Left cardiac atrium (tissue), 4 donors: ENCODE measurements at regions of chr1 and their contacts with region 1.

Region 1: GRCh38 chr1:115807723-115808122 is 33.2 kb downstream of the NHLH2 start:
- DNase-seq: peak; percentile 23
- ATAC-seq: peak; percentile 47 to 83

Region 2: DNA sequence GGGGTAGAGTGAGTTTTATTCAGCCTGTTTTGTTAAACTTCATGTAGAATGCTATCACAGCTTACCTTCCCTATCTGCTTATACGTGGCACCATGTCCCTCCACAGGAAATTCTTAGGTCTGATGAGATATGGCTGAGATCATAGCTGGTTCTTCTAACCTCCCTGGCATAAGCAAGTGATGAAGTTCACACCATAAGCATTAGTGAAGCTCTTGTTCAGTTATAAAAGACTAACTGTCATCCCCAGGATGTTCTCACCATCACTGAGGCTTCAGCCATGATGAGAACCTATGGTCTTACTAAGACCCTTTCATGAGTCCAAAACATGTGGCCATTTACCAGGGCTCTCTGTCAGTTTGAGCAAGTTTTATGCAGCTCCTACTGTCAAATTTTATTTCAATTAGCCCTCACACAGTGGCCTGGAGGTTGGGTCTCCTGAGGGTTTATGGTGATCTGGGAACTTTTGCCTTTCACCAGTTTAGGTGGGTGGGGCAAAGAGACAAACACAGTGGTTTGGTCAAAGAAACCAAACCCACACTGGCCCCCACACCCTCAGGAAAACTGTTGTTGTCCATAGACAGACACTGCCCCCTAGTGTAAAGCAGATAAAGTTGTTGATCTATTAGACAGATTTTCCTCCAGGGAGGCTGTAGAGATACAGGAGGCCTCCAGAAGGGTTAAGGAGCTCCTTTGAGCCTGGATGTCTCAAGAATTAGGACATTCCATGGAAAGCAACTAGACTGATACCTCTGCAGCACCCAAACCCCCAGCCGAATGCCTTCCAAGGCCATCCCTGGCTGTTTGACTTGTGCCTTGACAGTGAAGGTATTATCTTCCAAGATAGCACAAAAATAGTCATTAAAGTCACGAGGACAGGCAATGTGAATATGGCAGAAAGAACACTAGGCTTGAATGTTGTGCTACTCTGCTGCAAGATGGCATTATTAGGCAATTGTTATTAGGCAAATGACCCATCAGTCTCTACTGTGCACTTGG is 173.6 kb after region 1 on chr1:
- intact Hi-C with region 1: loop called in 1 of 2 experiments (anchors 10 kb)
- DNase-seq: peak; percentile 26
- ATAC-seq: peak in 1 of 2 donors; percentile 61

Region 3: GRCh38 chr1:116020668-116021275 is 213.0 kb after region 1 on chr1:
- intact Hi-C with region 1: loop called in 1 of 2 experiments (anchors 2 kb)
- DNase-seq: peak; percentile 49
- ATAC-seq: peak; percentile 63 to 72

Region 4: DNA sequence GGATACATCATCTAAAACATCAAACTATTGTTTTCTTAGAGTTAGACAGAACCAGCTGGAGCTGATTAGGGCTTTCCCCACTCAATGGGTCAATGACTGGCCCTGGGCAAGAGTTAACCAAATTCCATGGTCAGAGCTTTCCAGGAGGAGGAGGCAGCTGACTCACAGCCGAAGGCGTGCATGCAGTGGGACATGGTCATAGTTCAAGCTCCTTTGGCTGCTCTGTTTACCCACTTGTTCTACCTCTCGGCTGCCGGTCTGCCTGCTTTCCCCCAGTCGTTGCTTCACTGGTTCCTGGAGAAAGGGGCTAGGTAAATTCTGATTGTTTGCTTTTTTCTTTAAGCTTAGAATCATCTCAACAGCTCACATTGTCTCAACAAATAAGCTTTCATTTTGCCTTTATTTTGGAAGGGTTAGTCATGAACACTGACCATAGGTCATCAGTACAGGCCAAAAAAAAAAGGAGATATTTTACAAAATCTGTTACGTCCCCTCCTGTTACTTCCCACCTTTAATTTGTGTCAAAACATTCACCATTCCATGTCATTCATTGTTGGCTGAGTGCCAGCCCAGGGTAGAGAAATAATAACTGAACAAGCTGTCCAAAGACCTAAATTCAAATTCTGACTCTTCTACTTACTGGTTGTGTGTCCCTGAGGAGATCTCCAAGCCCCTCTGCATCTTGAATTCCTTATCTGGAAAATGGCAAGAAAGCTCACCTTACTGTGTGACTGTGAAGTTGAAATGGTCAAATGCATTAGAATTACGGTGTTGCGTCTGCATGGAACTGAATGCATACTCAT is 315.4 kb after region 1 on chr1:
- intact Hi-C with region 1: loop called in 1 of 2 experiments (anchors 10 kb)
- DNase-seq: no peak
- ATAC-seq: peak in 1 of 2 donors; percentile 87